Endothelial cell of umbilical vein (primary cell): ENCODE measurements at regions of chr12 and their contacts with region 1.

Region 1: DNA sequence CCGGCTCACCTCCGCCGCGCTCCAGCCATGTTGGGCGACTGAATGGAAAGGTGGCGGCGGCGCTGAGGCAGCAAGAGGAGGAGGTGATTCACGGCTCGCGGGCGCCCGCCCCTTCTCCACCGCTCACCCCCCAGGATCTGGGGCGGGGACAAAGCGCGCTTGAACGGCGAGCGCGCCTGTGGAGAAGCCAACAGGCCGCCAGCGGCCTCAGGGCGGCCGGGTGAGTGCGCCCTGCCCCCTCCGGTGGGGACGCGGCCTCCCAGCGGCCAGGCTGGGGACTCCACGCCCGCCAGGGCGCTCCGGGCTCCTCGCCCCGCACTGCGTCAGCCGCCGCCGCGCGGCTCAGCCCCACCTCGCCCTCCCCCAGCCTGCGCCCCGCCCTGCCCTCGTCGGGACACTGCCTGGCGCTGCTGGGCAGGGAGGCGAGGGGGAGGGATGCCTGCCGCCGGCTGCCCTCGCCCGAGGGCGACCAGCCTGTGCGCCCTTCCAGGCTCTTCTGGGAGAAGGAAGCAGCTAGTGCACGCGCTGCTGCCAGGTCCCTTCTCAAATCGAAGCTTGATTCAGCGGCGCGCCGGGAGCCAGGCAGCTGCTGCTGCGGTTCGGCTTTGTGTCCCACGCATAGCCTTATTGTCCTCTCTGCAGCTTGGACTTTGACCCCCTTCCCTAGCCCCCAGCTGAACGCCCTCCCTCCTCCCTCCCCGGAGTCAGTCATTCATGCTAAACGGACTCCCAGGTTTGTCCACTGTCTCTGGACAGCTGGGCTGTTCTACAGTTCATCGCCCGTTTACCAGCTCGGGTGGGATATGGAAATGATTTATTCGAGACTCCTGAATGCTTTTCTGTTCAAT is at the start of gene KIF21A:
- DNase-seq: peak; percentile 94
- H3K4me3 ChIP-seq: peak within 1 kb of the TSS; percentile 78 to 87 (median 84)
- H3K27ac ChIP-seq: peak within 1 kb of the TSS; percentile 71
- H3K4me1 ChIP-seq: peaks cover 12% of the 10 kb centered on the region
- H3K27me3 ChIP-seq: peaks cover 2% of the 10 kb centered on the region in 2 experiments
- CTCF ChIP-seq: peak; percentile 43 to 65
- POLR2A ChIP-seq: peak; percentile 71
- total RNA-seq, gene KIF21A: 9.6 and 10.1 TPM in 2 replicates

Region 2: GRCh38 chr12:39372929-39373328 is 70.4 kb before region 1 on chr12:
- CTCF ChIA-PET with region 1: no interaction called
- POLR2A ChIA-PET with region 1: no interaction called
- dilution Hi-C with region 1: no loop called
- intact Hi-C with region 1: loop called (anchors 5 kb)
- DNase-seq: peak; percentile 19
- H3K4me3 ChIP-seq: no peak overlapping the region
- H3K27ac ChIP-seq: no peak overlapping the region
- H3K4me1 ChIP-seq: peaks cover 6% of the 10 kb centered on the region
- H3K27me3 ChIP-seq: no peaks in the 10 kb centered on the region
- CTCF ChIP-seq: no peak
- POLR2A ChIP-seq: no peak

Region 3: GRCh38 chr12:39619660-39620433 is 176.5 kb after region 1 on chr12 and contains the start of gene ABCD2:
- CTCF ChIA-PET with region 1: interaction called, 4 read pairs
- POLR2A ChIA-PET with region 1: no interaction called
- dilution Hi-C with region 1: no loop called
- intact Hi-C with region 1: loop called (anchors 5 kb)
- DNase-seq: peak; percentile 76
- H3K4me3 ChIP-seq: peak within 1 kb of the TSS; percentile 38 to 58 (median 40)
- H3K27ac ChIP-seq: no peak within 1 kb of the TSS
- H3K4me1 ChIP-seq: peaks cover 3% of the 10 kb centered on the region
- H3K27me3 ChIP-seq: peaks cover 10 to 15% of the 10 kb centered on the region in 2 experiments
- CTCF ChIP-seq: no peak
- POLR2A ChIP-seq: no peak
- total RNA-seq, gene ABCD2: not detected in 2 replicates

Region 4: DNA sequence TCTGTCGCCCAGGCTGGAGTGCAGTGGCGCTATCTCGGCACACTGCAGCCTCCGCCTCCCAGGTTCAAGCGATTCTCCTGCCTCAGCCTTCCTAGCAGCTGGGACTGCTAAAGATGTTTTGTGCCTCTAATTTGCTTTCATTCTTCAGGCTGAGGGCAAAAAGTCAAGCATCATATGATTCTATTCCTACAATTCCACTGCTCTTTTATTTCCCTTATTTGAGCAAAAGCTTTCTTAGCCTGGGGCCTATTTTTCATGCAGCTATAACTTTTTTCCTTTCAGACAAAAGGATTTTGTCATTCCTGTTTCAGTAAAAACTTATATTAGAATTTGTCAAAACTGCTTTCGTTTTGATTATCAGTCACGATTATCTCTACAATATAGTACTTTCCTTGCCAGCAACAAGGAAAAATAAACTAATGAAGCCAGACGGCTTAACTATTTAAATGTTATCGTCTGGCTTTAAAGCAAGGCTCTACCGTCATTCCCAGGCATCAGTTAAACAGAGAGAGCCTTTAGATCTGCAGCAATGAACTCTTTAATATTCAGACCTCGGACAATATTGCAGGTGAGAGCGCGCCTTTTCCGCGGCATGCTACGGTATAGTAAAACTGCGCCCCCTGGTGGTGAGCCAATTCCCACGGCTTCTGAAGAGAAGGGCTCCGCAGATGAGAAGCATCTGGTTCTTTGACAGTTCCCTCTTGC is 663.9 kb after region 1 on chr12:
- CTCF ChIA-PET with region 1: no interaction called
- POLR2A ChIA-PET with region 1: no interaction called
- dilution Hi-C with region 1: no loop called
- intact Hi-C with region 1: loop called (anchors 1 kb)
- DNase-seq: peak; percentile 72
- H3K4me3 ChIP-seq: peak overlapping the region in 2 of 3 experiments; percentile 17 to 67
- H3K27ac ChIP-seq: no peak overlapping the region
- H3K4me1 ChIP-seq: peaks cover 14% of the 10 kb centered on the region
- H3K27me3 ChIP-seq: no peaks in the 10 kb centered on the region
- CTCF ChIP-seq: peak; percentile 85 to 92
- POLR2A ChIP-seq: no peak